ENCODE measurements at regions of chr20 and their contacts with region 1.

Region 1: GRCh38 chr20:4607287-4607713 is 114.4 kb upstream of the PRND start:
- DNase-seq: peak; percentile 68
- H3K4me3 Mint-ChIP-seq: no peak overlapping the region
- H3K27ac Mint-ChIP-seq: no peak overlapping the region
- H3K4me1 Mint-ChIP-seq: no peaks in the 10 kb centered on the region
- H3K27me3 Mint-ChIP-seq: peaks cover 33% of the 10 kb centered on the region

Region 2: DNA sequence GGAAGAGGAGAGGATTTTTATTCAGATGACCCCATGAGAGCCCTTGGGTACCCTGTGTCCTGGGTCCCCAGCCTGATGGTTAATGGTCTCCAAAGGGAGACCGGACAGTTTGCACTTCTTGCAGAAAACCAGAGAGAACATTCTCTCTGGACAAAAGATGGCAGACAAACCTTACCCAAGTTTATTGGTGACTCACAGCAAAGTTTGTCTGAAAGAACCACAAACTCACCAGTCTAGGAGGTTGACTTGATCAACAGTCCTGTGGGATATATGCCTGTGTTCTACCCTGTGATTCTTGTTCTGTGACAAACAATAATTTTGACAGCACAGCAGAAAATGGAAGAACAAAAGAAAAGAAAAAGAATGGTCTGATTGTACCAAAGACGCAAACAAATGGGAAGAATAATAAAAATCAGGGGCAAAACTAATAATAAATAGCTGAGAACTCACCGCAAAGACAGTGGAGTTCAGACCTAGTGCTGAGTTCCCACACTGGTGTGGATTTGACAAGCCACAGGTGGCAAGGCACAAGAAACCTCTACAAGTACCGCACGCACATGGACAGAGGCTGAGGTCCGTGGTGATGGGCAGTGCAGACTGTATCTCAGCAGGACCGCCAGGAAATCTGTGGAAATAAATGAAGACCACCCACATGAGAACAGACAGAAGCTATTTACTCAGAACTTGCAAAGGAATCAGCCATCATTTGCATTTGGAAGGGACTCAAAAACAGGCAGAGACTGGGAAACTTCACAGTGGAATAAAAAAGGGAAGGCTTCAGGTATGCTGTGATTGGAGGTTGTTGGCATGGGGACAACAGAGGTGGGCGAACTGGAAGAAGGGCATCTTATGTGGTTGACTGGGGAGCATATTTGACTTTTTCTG is 345.7 kb before region 1 on chr20:
- CTCF ChIA-PET with region 1: no interaction called
- DNase-seq: no peak
- H3K4me3 Mint-ChIP-seq: no peak overlapping the region
- H3K27ac Mint-ChIP-seq: no peak overlapping the region
- H3K4me1 Mint-ChIP-seq: no peaks in the 10 kb centered on the region
- H3K27me3 Mint-ChIP-seq: peaks cover 24% of the 10 kb centered on the region

Region 3: DNA sequence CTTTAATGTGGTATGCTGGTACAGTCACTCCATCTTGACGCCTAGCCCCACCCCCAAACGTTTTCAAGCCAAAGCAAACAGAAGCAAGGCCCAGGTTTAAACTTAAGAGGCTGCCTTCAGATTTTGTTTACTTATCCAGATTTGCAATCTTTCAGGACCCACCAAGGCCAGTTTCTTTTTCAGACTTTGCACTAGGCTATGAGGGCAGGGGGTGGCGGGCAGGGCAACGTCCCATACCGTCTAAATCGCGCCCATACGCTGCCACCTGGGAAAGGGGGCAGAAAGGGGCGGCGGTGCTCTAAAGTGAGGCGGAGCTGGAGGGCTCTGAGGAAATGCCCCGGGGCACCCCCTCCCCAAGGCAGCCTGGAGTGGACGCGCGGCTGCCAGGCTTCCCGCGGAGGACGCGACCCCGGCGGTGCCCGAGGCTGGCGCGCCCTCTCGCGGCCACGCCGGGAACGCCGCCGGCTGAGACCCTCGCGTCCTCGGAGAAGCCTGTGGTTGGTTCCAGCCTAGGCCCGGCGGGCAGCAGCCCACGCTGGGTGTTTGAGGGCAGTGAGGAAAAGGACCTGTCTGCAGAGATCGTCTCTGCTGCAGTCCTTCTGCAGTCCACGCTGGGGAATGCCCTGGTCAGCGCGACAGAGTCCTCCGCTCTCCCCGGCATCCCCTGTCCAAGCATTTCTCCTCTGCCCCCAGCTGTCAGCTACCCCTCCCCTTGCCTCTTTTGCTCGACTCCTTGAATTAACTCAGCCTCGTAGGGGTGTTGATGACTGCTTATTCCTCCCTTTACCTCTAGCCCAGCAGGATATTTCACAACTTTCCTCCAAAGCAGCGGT is 14.8 kb before region 1 on chr20:
- CTCF ChIA-PET with region 1: interaction called, 11 read pairs
- DNase-seq: peak; percentile 62
- H3K4me3 Mint-ChIP-seq: peak overlapping the region; percentile 58
- H3K27ac Mint-ChIP-seq: no peak overlapping the region
- H3K4me1 Mint-ChIP-seq: peaks cover 11% of the 10 kb centered on the region
- H3K27me3 Mint-ChIP-seq: peaks cover 17% of the 10 kb centered on the region

Region 4: GRCh38 chr20:4720041-4720976 is 113.0 kb after region 1 on chr20:
- CTCF ChIA-PET with region 1: interaction called, 19 read pairs
- DNase-seq: peak; percentile 82
- H3K4me3 Mint-ChIP-seq: no peak overlapping the region
- H3K27ac Mint-ChIP-seq: no peak overlapping the region
- H3K4me1 Mint-ChIP-seq: peaks cover 7% of the 10 kb centered on the region
- H3K27me3 Mint-ChIP-seq: peaks cover 16% of the 10 kb centered on the region

Measured in activated naive CD4-positive, alpha-beta T cell treated with anti-CD3 and anti-CD28 coated beads, Interleukin-2, amount 10 ng/mL, durations not matched to agents 7 days and 5 days (primary cell).